Naive thymus-derived CD4-positive, alpha-beta T cell (primary cell): ENCODE measurements at regions of chr15 and their contacts with region 1.

Region 1: DNA sequence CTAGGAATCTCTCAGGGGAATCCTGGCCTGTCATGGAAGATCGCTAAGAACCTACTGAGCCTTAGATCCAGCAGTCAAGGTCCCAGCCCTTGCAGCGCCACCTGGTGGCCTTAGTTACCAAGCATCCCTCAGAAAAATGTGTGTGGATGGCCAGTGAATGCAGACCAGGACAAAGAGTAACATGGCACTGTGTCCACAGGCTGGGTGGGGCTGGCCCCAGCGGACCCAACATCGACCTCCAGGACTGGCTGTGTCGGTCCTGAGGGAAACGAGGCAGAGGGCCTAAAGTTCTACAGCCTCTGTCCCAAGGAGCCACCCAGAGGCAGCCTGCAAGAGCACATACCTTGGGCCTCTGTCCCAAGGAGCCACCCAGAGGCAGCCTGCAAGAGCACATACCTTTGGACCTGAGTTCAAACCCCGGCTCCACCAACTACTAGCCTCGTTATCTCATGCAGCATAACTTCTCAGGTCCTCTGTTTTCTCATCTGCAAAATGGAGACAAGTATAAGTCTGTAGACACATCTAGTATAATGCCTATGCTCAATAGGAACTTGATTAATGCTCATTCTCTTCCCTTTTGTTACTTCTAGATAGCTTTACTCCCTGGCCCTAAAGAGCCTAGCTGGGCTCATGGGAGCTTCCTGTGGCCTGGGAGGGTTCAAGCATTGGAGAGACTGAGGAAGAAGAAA is 57.5 kb upstream of the HERC1 start:
- DNase-seq: peak; percentile 33 to 77 (median 59)
- ATAC-seq: peak; percentile 60
- H3K4me3 ChIP-seq: no peak overlapping the region
- H3K4me3 Mint-ChIP-seq: peak overlapping the region in 9 of 10 donors; percentile 17 to 82 (median 51)
- H3K27ac ChIP-seq: peak overlapping the region; percentile 54
- H3K27ac Mint-ChIP-seq: peak overlapping the region; percentile 75 to 98 (median 88)
- H3K4me1 ChIP-seq: peaks cover 53% of the 10 kb centered on the region in 2 donors
- H3K4me1 Mint-ChIP-seq: peaks cover 57 to 81% (median 73%) of the 10 kb centered on the region in 7 donors
- H3K27me3 ChIP-seq: no peaks in the 10 kb centered on the region
- H3K27me3 Mint-ChIP-seq: no peaks in the 10 kb centered on the region

Region 2: DNA sequence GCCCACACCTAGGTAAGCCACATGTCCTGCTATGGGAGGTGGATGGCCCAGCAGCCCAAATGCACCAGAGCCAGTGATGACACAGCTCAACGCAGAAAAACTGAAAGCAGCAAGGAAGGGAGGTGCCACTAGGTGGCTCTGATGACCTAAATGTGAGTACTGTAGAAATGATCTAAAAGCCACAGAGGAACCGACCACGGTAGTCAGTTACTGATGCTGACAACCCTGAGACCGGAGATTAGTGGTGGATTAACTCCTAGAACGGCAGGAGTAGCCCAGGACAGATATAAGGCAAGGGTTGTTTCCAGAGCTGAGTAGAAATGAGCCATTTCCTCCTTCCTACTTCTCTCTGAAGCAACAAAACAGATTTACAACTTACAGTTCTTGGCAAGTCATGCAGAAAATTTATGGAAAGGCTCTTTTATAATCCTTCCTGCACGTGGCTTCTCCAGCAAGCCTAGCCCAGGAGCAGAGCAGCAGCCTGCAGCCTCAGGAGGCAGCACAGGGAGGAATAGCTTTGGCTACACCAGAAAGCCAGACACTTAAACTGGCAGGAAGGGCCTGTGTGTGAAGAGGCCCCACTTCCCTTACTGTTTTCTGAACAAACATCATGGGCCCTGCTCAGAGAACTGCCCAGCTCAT is 280.9 kb before region 1 on chr15:
- CTCF ChIA-PET with region 1: no interaction called
- POLR2A ChIA-PET with region 1: no interaction called
- intact Hi-C with region 1: loop called (anchors 1 to 2 kb)
- DNase-seq: peak in 8 of 9 donors; percentile 43 to 71 (median 64)
- ATAC-seq: peak; percentile 94
- H3K4me3 ChIP-seq: no peak overlapping the region
- H3K4me3 Mint-ChIP-seq: peak overlapping the region in 7 of 10 donors; percentile 9 to 68 (median 42)
- H3K27ac ChIP-seq: peak overlapping the region; percentile 69
- H3K27ac Mint-ChIP-seq: peak overlapping the region; percentile 74 to 94 (median 84)
- H3K4me1 ChIP-seq: peaks cover 23 to 25% of the 10 kb centered on the region in 2 donors
- H3K4me1 Mint-ChIP-seq: peaks cover 23 to 51% (median 41%) of the 10 kb centered on the region in 7 donors
- H3K27me3 ChIP-seq: no peaks in the 10 kb centered on the region
- H3K27me3 Mint-ChIP-seq: no peaks in the 10 kb centered on the region

Region 3: DNA sequence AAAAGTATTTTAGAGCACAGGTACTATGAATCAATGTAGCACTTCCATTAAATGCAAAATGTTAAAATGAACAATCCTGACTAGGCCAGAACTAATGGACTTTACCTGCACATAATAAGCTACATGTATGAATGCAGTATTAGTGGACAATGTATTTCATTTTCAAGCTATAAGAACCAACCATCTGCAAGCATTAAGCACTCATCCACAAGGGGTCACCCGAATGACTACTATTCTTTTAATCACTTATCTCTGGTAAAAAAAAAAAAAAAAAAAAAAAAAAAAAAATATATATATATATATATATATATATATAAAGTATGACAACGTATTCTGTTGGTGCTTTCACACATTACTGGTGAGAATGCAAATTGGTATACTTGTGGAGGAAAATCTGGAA is 64.7 kb before region 1 on chr15:
- CTCF ChIA-PET with region 1: interaction called, 4 read pairs
- POLR2A ChIA-PET with region 1: interaction called, 3 read pairs
- intact Hi-C with region 1: loop called in 1 of 2 experiments (anchors 1 kb)
- DNase-seq: peak in 3 of 9 donors; percentile 36 to 44 (median 37)
- ATAC-seq: peak; percentile 26
- H3K4me3 ChIP-seq: no peak overlapping the region
- H3K4me3 Mint-ChIP-seq: peak overlapping the region in 8 of 10 donors; percentile 3 to 53 (median 34)
- H3K27ac ChIP-seq: no peak overlapping the region
- H3K27ac Mint-ChIP-seq: peak overlapping the region in 7 of 9 donors; percentile 36 to 98 (median 58)
- H3K4me1 ChIP-seq: peaks cover 21 to 31% of the 10 kb centered on the region in 2 donors
- H3K4me1 Mint-ChIP-seq: peaks cover 67 to 94% (median 85%) of the 10 kb centered on the region in 7 donors
- H3K27me3 ChIP-seq: no peaks in the 10 kb centered on the region
- H3K27me3 Mint-ChIP-seq: no peaks in the 10 kb centered on the region

Region 4: GRCh38 chr15:63839722-63840121 is 51.5 kb before region 1 on chr15:
- CTCF ChIA-PET with region 1: interaction called, 5 read pairs
- POLR2A ChIA-PET with region 1: interaction called, 3 read pairs
- intact Hi-C with region 1: loop called in 1 of 2 experiments (anchors 1 kb)
- DNase-seq: no peak
- ATAC-seq: no peak
- H3K4me3 ChIP-seq: no peak overlapping the region
- H3K4me3 Mint-ChIP-seq: no peak overlapping the region
- H3K27ac ChIP-seq: no peak overlapping the region
- H3K27ac Mint-ChIP-seq: peak overlapping the region in 4 of 9 donors; percentile 8 to 69 (median 60)
- H3K4me1 ChIP-seq: peaks cover 6 to 17% of the 10 kb centered on the region in 2 donors
- H3K4me1 Mint-ChIP-seq: peaks cover under 1 to 27% (median 25%) of the 10 kb centered on the region in 7 donors
- H3K27me3 ChIP-seq: no peaks in the 10 kb centered on the region
- H3K27me3 Mint-ChIP-seq: peaks cover 0 to 23% (median 0%) of the 10 kb centered on the region in 5 donors

Region 5: GRCh38 chr15:63939531-63940130 is 48.4 kb after region 1 on chr15:
- CTCF ChIA-PET with region 1: interaction called, 6 read pairs
- POLR2A ChIA-PET with region 1: no interaction called
- intact Hi-C with region 1: loop called in 1 of 2 experiments (anchors 5 kb)
- DNase-seq: peak in 1 of 9 donors; percentile 33
- ATAC-seq: peak; percentile 45
- H3K4me3 ChIP-seq: no peak overlapping the region
- H3K4me3 Mint-ChIP-seq: peak overlapping the region in 9 of 10 donors; percentile 3 to 81 (median 54)
- H3K27ac ChIP-seq: no peak overlapping the region
- H3K27ac Mint-ChIP-seq: peak overlapping the region in 8 of 9 donors; percentile 24 to 93 (median 78)
- H3K4me1 ChIP-seq: peaks cover 17 to 30% of the 10 kb centered on the region in 2 donors
- H3K4me1 Mint-ChIP-seq: peaks cover 29 to 58% (median 31%) of the 10 kb centered on the region in 7 donors
- H3K27me3 ChIP-seq: no peaks in the 10 kb centered on the region
- H3K27me3 Mint-ChIP-seq: no peaks in the 10 kb centered on the region

Region 6: GRCh38 chr15:63970621-63971426 is 79.6 kb after region 1 on chr15:
- CTCF ChIA-PET with region 1: no interaction called
- POLR2A ChIA-PET with region 1: no interaction called
- intact Hi-C with region 1: loop called in 1 of 2 experiments (anchors 2 kb)
- DNase-seq: peak in 4 of 9 donors; percentile 3 to 44 (median 10)
- ATAC-seq: peak; percentile 52
- H3K4me3 ChIP-seq: peak overlapping the region; percentile 17
- H3K4me3 Mint-ChIP-seq: peak overlapping the region; percentile 6 to 87 (median 54)
- H3K27ac ChIP-seq: peak overlapping the region; percentile 1
- H3K27ac Mint-ChIP-seq: peak overlapping the region; percentile 73 to 99 (median 83)
- H3K4me1 ChIP-seq: peaks cover 20 to 24% of the 10 kb centered on the region in 2 donors
- H3K4me1 Mint-ChIP-seq: peaks cover 24 to 46% (median 30%) of the 10 kb centered on the region in 7 donors
- H3K27me3 ChIP-seq: no peaks in the 10 kb centered on the region
- H3K27me3 Mint-ChIP-seq: no peaks in the 10 kb centered on the region

Region 7: DNA sequence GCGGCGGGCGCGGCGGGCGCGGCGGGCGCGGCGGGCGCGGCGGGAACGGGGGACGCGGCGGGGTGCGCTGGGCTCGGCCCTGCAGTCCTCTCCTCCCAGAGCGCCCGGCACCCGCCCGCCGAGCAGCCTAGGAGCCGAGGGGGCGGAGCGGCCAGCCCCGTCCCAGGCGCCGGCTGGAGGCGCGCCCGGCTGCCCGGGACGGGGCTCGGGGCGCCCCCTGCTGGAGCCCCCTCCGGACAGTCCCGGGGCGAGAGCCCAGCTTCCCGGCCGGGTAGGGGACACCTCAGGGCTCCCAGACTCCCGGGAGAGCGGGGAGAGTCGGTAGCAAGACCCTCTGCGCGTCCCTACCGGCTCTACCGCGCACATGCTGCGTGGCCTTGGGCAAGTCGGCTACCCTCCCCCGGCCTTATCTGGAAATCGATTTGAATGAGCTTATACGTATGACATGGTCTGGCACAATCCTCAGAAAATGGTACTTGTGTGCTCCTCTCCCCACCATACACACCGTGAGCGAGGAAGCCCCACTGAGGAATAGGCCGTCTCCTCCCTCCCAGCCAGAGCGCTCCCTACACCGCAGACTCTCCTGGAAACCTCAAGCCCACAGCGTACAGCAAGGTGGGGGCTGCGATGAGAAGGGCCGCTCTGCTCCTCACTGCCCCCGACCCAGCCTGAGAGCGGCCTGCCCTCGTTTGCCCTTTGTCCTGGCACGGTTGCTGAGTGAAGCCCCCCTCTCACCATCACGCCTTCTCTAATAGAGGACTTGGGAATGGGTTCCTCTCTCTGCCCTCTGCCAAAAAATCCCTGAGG is 155.3 kb after region 1 on chr15 and contains the start of gene DAPK2:
- CTCF ChIA-PET with region 1: interaction called, 4 read pairs
- POLR2A ChIA-PET with region 1: no interaction called
- intact Hi-C with region 1: loop called (anchors 1 to 5 kb)
- DNase-seq: peak; percentile 29 to 83 (median 63)
- ATAC-seq: peak; percentile 91
- H3K4me3 ChIP-seq: peak within 1 kb of the TSS; percentile 55
- H3K4me3 Mint-ChIP-seq: peak within 1 kb of the TSS; percentile 74 to 85 (median 82)
- H3K27ac ChIP-seq: no peak within 1 kb of the TSS
- H3K27ac Mint-ChIP-seq: peak within 1 kb of the TSS in 5 of 9 donors; percentile 28 to 88 (median 61)
- H3K4me1 ChIP-seq: peaks cover 0 to 5% of the 10 kb centered on the region in 2 donors
- H3K4me1 Mint-ChIP-seq: peaks cover 5 to 30% (median 10%) of the 10 kb centered on the region in 7 donors
- H3K27me3 ChIP-seq: no peaks in the 10 kb centered on the region
- H3K27me3 Mint-ChIP-seq: peaks cover 4 to 41% (median 13%) of the 10 kb centered on the region in 5 donors
- total RNA-seq, gene DAPK2: 0.46 to 9.3 (median 4.2) TPM in 4 of 5 experiments, not detected in the other